ENCODE measurements at regions of chr10 and their contacts with region 1.

Region 1: DNA sequence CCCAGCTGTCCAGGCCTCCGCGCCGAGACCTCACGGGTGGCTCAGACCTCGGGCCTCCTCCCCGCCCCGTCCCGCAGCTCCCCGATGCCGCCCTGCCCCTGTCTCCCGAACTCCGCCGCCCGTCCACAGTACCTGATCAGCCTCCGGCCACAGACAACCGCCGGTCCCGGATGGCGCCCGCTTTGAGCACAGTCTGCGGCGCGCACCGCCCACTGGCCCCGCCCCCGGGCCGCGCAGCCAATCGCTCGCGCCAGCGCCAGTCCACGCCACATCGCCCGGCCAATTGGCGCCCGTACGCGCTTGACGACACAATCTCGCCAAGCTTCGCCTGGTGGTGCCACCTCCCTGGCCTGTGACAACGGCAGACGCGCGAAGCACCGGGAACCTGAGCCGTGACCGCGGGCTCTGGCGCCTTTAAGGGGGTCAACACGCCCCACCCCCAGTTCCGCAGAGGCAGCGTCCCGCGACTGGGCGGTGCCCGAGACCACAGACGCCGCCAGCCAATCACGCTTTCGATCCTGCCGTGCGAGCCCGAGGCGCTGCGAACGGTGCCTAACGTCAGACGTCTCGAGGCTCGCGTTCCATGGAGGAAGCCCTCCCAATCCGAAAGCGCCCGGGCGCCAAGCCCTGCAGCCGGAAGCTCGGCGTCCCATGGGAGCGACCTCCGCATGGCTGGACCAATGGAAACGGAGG is at the start of gene IDI1:
- DNase-seq: peak; percentile 96 to 98 (median 97)
- ATAC-seq: peak; percentile 89
- H3K4me3 ChIP-seq: peak within 1 kb of the TSS; percentile 89
- H3K4me3 Mint-ChIP-seq: peak within 1 kb of the TSS; percentile 92 to 98 (median 94)
- H3K27ac ChIP-seq: peak within 1 kb of the TSS; percentile 99
- H3K27ac Mint-ChIP-seq: peak within 1 kb of the TSS; percentile 95 to 99 (median 98)
- H3K4me1 ChIP-seq: peaks cover 38 to 50% of the 10 kb centered on the region in 2 donors
- H3K4me1 Mint-ChIP-seq: peaks cover 39 to 75% (median 70%) of the 10 kb centered on the region in 7 donors
- H3K27me3 ChIP-seq: no peaks in the 10 kb centered on the region
- H3K27me3 Mint-ChIP-seq: no peaks in the 10 kb centered on the region
- total RNA-seq, gene IDI1: 23.4 to 159 (median 44.9) TPM

Region 2: DNA sequence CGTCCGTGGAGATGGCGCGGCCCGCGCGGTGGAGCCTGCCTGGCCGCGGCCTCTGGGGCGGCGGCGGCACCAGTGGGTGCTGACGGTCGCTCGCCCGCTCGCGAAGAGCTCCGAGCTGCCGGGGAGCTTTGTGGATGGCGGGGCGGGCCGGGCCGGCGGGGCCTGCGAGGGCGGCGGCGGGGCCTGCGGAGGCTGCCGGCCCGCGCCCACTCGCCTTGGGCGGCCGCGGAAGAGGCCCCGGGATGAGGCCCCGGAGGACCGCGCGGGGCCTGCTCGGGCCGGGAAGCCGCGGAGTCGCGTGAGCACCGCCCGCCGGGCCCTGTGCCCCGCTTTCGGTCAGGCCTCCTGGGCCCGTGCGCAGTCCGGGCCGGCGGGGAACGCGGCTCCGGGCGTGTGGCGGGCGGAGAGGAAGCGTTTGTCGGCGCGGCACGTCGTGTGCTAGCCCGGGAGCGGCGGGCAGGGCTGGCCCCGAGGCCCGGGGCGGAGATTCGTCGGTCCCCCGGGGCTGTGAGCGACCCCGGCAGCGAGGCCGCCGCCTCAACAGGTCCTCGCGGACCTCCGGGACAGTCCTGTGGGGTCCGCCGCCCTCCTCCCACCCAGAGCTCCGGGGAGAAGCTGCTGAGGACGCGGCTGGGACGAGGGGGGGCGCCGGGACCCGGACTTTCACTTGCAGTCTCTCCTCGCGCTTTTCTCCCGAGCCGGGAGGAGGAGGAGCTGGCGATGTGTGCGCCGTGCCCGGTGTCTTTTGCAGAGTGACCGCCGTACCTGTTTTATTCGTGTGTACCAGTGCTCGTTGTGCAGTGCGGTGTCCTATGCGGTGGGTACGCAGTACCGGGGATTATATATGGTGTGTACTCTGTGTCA is 913.0 kb before region 1 on chr10:
- CTCF ChIA-PET with region 1: interaction called, 4 read pairs
- POLR2A ChIA-PET with region 1: no interaction called
- intact Hi-C with region 1: loop called in 1 of 2 experiments (anchors 2 kb)
- DNase-seq: peak; percentile 54 to 77 (median 68)
- ATAC-seq: peak; percentile 67
- H3K4me3 ChIP-seq: peak overlapping the region; percentile 67
- H3K4me3 Mint-ChIP-seq: peak overlapping the region; percentile 86 to 96 (median 94)
- H3K27ac ChIP-seq: peak overlapping the region; percentile 90
- H3K27ac Mint-ChIP-seq: peak overlapping the region; percentile 82 to 96 (median 93)
- H3K4me1 ChIP-seq: peaks cover 16 to 17% of the 10 kb centered on the region in 2 donors
- H3K4me1 Mint-ChIP-seq: peaks cover 27 to 59% (median 49%) of the 10 kb centered on the region in 7 donors
- H3K27me3 ChIP-seq: no peaks in the 10 kb centered on the region
- H3K27me3 Mint-ChIP-seq: peaks cover 0 to 15% (median 0%) of the 10 kb centered on the region in 5 donors

Region 3: GRCh38 chr10:484441-484924 is 564.4 kb before region 1 on chr10:
- CTCF ChIA-PET with region 1: no interaction called
- POLR2A ChIA-PET with region 1: no interaction called
- intact Hi-C with region 1: loop called in 1 of 2 experiments (anchors 10 kb)
- DNase-seq: peak in 5 of 9 donors; percentile 5 to 35 (median 22)
- ATAC-seq: peak; percentile 59
- H3K4me3 ChIP-seq: peak overlapping the region; percentile 64
- H3K4me3 Mint-ChIP-seq: peak overlapping the region; percentile 73 to 95 (median 86)
- H3K27ac ChIP-seq: peak overlapping the region; percentile 76
- H3K27ac Mint-ChIP-seq: peak overlapping the region; percentile 88 to 99 (median 94)
- H3K4me1 ChIP-seq: no peaks in the 10 kb centered on the region
- H3K4me1 Mint-ChIP-seq: peaks cover 5 to 25% (median 13%) of the 10 kb centered on the region in 7 donors
- H3K27me3 ChIP-seq: no peaks in the 10 kb centered on the region
- H3K27me3 Mint-ChIP-seq: no peaks in the 10 kb centered on the region

Region 4: GRCh38 chr10:931416-932318 is 117.2 kb before region 1 on chr10 and contains the start of gene LARP4B:
- CTCF ChIA-PET with region 1: no interaction called
- POLR2A ChIA-PET with region 1: interaction called, 11 read pairs
- intact Hi-C with region 1: loop called (anchors 1 kb)
- DNase-seq: peak; percentile 95 to 99 (median 98)
- ATAC-seq: peak; percentile 98
- H3K4me3 ChIP-seq: peak within 1 kb of the TSS; percentile 42
- H3K4me3 Mint-ChIP-seq: peak within 1 kb of the TSS; percentile 82 to 99 (median 94)
- H3K27ac ChIP-seq: peak within 1 kb of the TSS; percentile 96
- H3K27ac Mint-ChIP-seq: peak within 1 kb of the TSS; percentile 91 to 96 (median 94)
- H3K4me1 ChIP-seq: peaks cover 9 to 12% of the 10 kb centered on the region in 2 donors
- H3K4me1 Mint-ChIP-seq: peaks cover 26 to 48% (median 41%) of the 10 kb centered on the region in 7 donors
- H3K27me3 ChIP-seq: no peaks in the 10 kb centered on the region
- H3K27me3 Mint-ChIP-seq: no peaks in the 10 kb centered on the region
- total RNA-seq, gene LARP4B: 65.2 to 114 (median 96.9) TPM

Region 5: DNA sequence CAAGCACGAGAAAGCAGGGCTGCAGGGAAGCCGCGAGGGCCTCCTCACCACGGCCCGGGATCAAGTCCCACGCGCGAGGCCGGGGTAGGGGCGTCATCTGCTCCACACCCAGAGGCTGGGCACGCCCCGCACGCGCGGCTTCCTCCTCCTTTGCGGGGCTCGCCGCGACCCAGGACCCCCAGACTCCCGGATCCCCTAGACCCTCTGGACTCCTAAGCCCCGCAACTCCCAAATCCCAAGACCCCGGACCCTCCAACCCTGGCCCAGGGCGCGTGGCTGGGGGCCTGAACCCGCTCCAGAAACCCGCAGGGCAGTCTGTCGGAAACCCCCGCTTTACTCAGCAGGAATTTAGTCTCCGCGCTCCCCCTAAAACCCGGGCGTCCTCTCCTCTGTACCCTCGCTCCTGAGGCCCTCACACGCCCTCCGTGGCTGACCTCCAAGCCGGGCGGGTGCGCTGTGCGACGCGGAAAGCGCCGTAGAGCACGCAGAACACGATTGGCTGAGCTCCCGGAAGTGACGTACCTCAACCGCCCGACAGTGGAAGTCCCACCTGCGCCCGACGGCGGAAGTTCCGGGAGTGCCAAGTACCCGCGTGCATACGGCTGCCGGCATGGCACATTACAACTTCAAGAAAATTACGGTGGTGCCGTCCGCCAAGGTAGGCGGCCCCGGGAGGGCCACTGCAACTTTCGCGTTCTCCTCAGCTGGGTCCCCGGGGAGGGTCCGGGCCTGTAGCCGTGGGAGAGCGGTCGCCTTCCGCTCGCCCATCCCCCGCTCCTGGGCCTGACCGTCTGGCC is 60.8 kb before region 1 on chr10 and contains the start of gene GTPBP4:
- CTCF ChIA-PET with region 1: interaction called, 5 read pairs
- POLR2A ChIA-PET with region 1: interaction called, 27 read pairs
- intact Hi-C with region 1: loop called (anchors 1 kb)
- DNase-seq: peak; percentile 88 to 98 (median 95)
- ATAC-seq: peak; percentile 99
- H3K4me3 ChIP-seq: peak within 1 kb of the TSS; percentile 90
- H3K4me3 Mint-ChIP-seq: peak within 1 kb of the TSS; percentile 95 to 98 (median 96)
- H3K27ac ChIP-seq: peak within 1 kb of the TSS; percentile 95
- H3K27ac Mint-ChIP-seq: peak within 1 kb of the TSS; percentile 88 to 99 (median 97)
- H3K4me1 ChIP-seq: peaks cover 18 to 19% of the 10 kb centered on the region in 2 donors
- H3K4me1 Mint-ChIP-seq: peaks cover 21 to 45% (median 40%) of the 10 kb centered on the region in 7 donors
- H3K27me3 ChIP-seq: no peaks in the 10 kb centered on the region
- H3K27me3 Mint-ChIP-seq: no peaks in the 10 kb centered on the region
- total RNA-seq, gene GTPBP4: 39.0 to 81.8 (median 45.2) TPM

Region 6: DNA sequence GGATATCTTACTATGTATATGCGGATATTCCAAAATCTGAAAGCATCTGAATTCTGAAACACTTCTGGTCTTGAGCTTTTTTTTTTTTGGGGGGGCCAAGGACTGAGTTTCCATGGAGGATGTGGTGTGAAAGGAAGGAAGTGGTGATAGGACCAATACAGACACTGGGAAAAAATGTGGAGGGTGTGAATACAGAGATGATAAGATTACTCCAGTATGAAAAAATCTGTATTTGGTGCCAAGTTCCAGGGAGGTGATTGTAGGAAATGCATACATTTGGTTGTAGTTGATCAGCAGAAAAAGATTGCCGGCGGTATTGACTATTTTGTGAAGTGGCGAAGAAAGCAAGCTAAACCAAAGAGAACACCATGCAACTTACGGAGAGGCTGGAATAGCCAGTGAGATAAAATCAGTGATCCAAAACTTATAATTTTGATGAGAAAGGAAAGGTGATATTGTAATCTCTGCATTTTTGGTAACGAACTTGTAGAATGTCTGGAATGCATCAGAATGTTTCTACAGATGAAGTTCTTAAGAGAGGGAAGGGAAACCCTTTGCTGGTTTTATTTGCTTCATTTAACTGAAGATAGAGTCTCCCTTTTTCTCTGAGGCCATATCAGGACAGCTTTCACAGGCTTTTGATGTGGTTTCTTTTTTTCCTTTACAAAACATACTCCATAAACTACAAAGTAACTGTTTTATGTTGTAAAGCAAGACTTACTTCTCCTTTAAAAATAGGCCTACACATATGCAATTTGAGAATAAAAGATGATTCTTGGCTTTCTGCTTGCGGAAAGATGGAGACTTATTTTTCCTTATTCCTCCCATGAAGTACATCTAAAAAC is 13.3 kb after region 1 on chr10:
- CTCF ChIA-PET with region 1: interaction called, 6 read pairs
- POLR2A ChIA-PET with region 1: interaction called, 13 read pairs
- intact Hi-C with region 1: loop called in 1 of 2 experiments (anchors 2 kb)
- DNase-seq: peak in 4 of 9 donors; percentile 23 to 65 (median 38)
- ATAC-seq: peak; percentile 46
- H3K4me3 ChIP-seq: peak overlapping the region; percentile 29
- H3K4me3 Mint-ChIP-seq: peak overlapping the region; percentile 62 to 81 (median 76)
- H3K27ac ChIP-seq: peak overlapping the region; percentile 73
- H3K27ac Mint-ChIP-seq: peak overlapping the region; percentile 58 to 99 (median 90)
- H3K4me1 ChIP-seq: peaks cover 62 to 72% of the 10 kb centered on the region in 2 donors
- H3K4me1 Mint-ChIP-seq: peaks cover 67 to 98% (median 92%) of the 10 kb centered on the region in 7 donors
- H3K27me3 ChIP-seq: no peaks in the 10 kb centered on the region
- H3K27me3 Mint-ChIP-seq: no peaks in the 10 kb centered on the region

Region 7: DNA sequence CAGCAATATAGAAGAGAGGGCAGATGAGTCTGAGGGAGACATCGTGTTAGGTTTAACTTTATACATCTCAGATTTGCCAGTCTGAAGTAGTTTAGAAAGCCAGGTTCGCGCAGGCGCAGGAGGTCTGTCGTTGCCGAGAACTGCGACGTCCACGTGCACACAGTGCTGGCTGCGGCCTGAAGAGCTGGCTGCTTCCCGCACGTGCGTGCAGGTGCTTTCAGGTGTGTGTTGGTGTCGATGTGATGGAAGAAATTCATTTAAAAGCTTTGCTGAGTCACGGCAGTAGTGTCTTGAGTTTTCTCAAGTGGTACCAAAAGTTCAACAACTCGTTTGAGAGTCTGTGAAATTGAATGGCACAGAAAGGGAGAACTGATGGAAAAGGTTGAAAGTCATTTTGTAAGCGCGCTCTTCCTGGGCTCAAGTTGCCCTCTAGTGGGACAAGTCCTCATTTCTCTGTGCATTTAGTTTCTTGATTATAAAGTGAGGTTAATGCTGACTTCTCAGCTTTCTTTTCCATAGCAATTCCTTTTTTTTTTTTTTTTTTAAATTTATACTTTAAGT is 25.9 kb after region 1 on chr10:
- CTCF ChIA-PET with region 1: no interaction called
- POLR2A ChIA-PET with region 1: interaction called, 10 read pairs
- intact Hi-C with region 1: loop called in 1 of 2 experiments (anchors 1 kb)
- DNase-seq: peak in 3 of 9 donors; percentile 7 to 23 (median 21)
- ATAC-seq: peak; percentile 34
- H3K4me3 ChIP-seq: no peak overlapping the region
- H3K4me3 Mint-ChIP-seq: peak overlapping the region in 1 of 10 donors; percentile 0
- H3K27ac ChIP-seq: no peak overlapping the region
- H3K27ac Mint-ChIP-seq: peak overlapping the region in 6 of 9 donors; percentile 9 to 83 (median 46)
- H3K4me1 ChIP-seq: peaks cover 3 to 4% of the 10 kb centered on the region in 2 donors
- H3K4me1 Mint-ChIP-seq: peaks cover 8 to 29% (median 21%) of the 10 kb centered on the region in 7 donors
- H3K27me3 ChIP-seq: no peaks in the 10 kb centered on the region
- H3K27me3 Mint-ChIP-seq: no peaks in the 10 kb centered on the region

Region 8: GRCh38 chr10:1089017-1089689 is 40.3 kb after region 1 on chr10:
- CTCF ChIA-PET with region 1: no interaction called
- POLR2A ChIA-PET with region 1: no interaction called
- intact Hi-C with region 1: no loop called
- DNase-seq: no peak
- ATAC-seq: no peak
- H3K4me3 ChIP-seq: no peak overlapping the region
- H3K4me3 Mint-ChIP-seq: no peak overlapping the region
- H3K27ac ChIP-seq: no peak overlapping the region
- H3K27ac Mint-ChIP-seq: peak overlapping the region in 2 of 9 donors; percentile 63 to 65
- H3K4me1 ChIP-seq: no peaks in the 10 kb centered on the region
- H3K4me1 Mint-ChIP-seq: peaks cover 0 to 15% (median 10%) of the 10 kb centered on the region in 7 donors
- H3K27me3 ChIP-seq: no peaks in the 10 kb centered on the region
- H3K27me3 Mint-ChIP-seq: no peaks in the 10 kb centered on the region

Region 9: GRCh38 chr10:1287971-1288401 is 239.1 kb after region 1 on chr10:
- CTCF ChIA-PET with region 1: no interaction called
- POLR2A ChIA-PET with region 1: no interaction called
- intact Hi-C with region 1: no loop called
- DNase-seq: no peak
- ATAC-seq: peak; percentile 29
- H3K4me3 ChIP-seq: no peak overlapping the region
- H3K4me3 Mint-ChIP-seq: peak overlapping the region in 4 of 10 donors; percentile 44 to 70 (median 68)
- H3K27ac ChIP-seq: no peak overlapping the region
- H3K27ac Mint-ChIP-seq: peak overlapping the region in 4 of 9 donors; percentile 20 to 79 (median 55)
- H3K4me1 ChIP-seq: peaks cover 0 to 6% of the 10 kb centered on the region in 2 donors
- H3K4me1 Mint-ChIP-seq: peaks cover 0 to 17% (median 4%) of the 10 kb centered on the region in 7 donors
- H3K27me3 ChIP-seq: no peaks in the 10 kb centered on the region
- H3K27me3 Mint-ChIP-seq: peaks cover 0 to 12% (median 5%) of the 10 kb centered on the region in 5 donors

Measured in naive thymus-derived CD4-positive, alpha-beta T cell (primary cell).